Heart left ventricle (tissue), 16 donors: ENCODE measurements at regions of chr3 and their contacts with region 1.

Region 1: GRCh38 chr3:46829699-46830208 is 33.5 kb downstream of the MYL3 start:
- DNase-seq: no peak
- ATAC-seq: no peak
- H3K4me3 ChIP-seq: no peak overlapping the region
- H3K27ac ChIP-seq: no peak overlapping the region
- H3K4me1 ChIP-seq: no peaks in the 10 kb centered on the region
- H3K27me3 ChIP-seq: no peaks in the 10 kb centered on the region
- CTCF ChIP-seq: no peak
- POLR2A ChIP-seq: no peak

Region 2: GRCh38 chr3:46717447-46718231 is 112.1 kb before region 1 on chr3 and contains the start of gene PRSS50:
- intact Hi-C with region 1: loop called in 2 of 10 experiments (anchors 5 to 10 kb)
- DNase-seq: peak in 1 of 5 donors; percentile 64
- ATAC-seq: peak in 1 of 4 donors; percentile 8
- H3K4me3 ChIP-seq: no peak within 1 kb of the TSS
- H3K27ac ChIP-seq: no peak within 1 kb of the TSS
- H3K4me1 ChIP-seq: peaks cover 0 to 7% (median 0%) of the 10 kb centered on the region in 12 donors
- H3K27me3 ChIP-seq: peaks cover 0 to 16% (median 5%) of the 10 kb centered on the region in 9 donors
- CTCF ChIP-seq: peak in 7 of 12 donors; percentile 13 to 41 (median 21)
- POLR2A ChIP-seq: no peak
- total RNA-seq, gene PRSS50: 0.23 to 0.65 (median 0.35) TPM in 7 of 9 donors, not detected in the others

Region 3: DNA sequence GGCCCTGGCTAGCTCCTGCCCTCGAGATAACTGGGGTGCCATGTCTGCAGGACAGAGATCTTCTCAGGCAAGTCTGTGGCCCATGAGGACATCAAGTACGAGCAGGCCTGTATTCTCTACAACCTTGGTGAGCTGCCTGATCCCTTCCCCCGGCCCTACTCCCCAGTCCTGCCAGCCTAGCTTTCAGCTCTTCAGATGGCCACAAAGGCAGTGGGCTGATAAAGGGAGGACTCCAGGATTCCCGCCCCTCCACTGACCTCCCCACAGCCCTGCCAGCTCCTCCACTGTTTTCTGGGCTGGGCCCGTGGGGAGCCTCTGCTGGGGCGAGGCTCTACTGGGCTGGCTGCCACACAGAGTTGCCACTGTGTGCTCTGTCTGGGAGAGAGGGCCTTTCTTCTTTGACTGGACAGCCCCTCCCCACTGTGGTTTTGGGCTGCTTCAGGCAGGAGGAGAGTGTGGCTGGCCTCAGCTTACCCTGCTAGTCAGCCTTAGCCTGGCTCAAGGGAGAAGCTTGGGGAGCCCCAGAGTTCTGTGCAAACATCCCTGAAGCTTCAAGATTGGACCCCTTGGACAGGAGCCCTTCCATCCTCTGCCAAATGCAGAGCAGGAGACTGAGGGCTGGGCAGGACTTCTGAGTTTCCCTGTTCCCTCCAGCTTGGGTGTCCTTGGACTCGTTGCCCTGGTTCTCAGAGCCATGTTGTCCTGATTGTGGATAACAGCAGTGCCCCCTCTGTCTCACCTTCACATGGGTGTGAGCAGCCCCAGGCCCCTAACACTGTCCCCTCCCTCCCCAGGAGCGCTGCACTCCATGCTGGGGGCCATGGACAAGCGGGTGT is 575.4 kb after region 1 on chr3:
- intact Hi-C with region 1: no loop called
- DNase-seq: peak in 1 of 5 donors; percentile 69
- ATAC-seq: peak; percentile 55 to 74 (median 64)
- H3K4me3 ChIP-seq: no peak overlapping the region
- H3K27ac ChIP-seq: peak overlapping the region in 11 of 12 donors; percentile 13 to 66 (median 59)
- H3K4me1 ChIP-seq: peaks cover 0 to 23% (median 17%) of the 10 kb centered on the region in 12 donors
- H3K27me3 ChIP-seq: no peaks in the 10 kb centered on the region
- CTCF ChIP-seq: no peak
- POLR2A ChIP-seq: no peak